HCT116 (cell line): ENCODE measurements at regions of chr4 and their contacts with region 1.

Region 1: DNA sequence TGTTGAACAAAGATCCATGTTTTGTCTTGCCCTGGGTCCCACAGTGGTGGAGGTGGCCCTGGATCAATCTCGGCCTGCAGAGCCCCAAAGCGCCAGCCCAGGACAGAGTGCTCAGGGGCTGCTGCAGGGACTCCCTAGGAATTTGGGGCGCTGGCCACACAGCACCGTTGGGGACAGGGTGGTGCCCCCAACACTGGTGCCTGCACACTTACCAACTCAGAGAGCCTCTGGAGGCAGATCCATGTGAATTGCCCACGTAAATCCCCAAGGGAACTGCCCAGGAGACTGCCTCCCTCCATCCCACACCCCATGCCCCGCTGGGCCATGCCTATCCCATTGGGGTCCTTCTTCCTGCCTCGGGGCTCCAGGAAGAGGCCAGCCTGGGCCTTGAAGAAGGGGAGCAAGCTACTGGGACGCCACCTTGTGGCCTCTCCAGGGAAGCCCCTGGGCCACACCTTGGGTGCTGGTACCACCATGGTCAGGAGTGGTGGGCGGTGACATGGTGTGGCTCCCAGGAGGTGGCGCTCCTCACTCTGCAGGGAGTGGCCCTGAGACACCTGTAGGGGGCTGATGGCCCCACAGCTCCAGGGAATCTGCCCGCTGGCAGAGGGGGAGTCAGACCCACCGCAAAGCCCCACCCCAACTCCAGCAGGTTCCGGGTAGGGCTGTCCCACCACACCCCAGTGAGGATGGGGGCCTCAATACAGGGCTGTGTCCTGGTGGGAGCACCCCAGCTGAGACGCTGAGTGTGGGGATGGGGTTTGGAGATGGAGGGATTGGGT is 22.8 kb downstream of the CFAP99 start:
- DNase-seq: peak; percentile 85
- ATAC-seq: peak; percentile 99
- H3K4me3 ChIP-seq: no peak overlapping the region
- H3K27ac ChIP-seq: no peak overlapping the region; the same call in 1 of the 2 replicates
- H3K4me1 ChIP-seq: peaks cover 4 to 10% of the 10 kb centered on the region in 2 experiments; a peak in 3 of 4 replicates
- H3K27me3 ChIP-seq: no peaks in the 10 kb centered on the region
- CTCF ChIP-seq: peak; percentile 97 to 100 (median 99)
- POLR2A ChIP-seq: no peak
- RAD21 ChIP-seq: peak; percentile 90

Region 2: DNA sequence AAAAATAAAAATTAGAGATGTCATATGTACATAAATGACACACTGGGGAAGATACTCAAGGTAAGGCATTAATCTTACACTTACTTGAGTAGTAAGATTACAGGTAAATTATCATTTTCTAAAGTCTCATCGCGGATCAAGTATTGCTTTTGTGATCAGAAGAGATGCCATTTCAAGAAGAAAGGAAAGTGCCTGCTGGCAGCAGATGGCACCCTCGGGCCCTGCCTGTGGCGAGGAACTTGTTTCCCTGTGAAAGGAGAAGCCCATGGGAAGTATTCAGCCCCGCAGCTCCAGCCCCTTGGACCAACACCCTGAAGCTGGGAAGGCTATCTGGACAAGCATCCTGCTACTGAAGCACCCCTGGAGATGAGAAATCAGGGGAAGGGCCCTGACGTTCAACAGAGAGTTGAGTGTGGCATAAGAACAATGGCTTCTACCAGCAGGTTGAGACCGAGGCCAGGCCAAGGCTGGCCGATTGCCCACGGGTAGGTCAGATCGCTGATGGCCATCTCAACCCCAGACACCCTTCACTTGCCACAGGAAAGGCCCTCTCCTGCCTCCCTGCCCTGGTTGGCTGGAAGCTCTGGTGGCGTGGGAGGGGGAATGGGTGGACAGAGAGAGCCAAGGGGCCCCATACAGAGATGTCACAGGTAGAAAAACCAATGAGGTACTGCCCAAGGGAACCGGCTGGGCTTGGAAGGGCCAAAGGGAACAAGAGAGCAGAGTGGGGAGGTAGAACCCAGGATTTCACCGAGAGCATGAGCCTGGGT is 160.9 kb before region 1 on chr4:
- CTCF ChIA-PET with region 1: interaction called, 3 read pairs
- POLR2A ChIA-PET with region 1: no interaction called
- RAD21 ChIA-PET with region 1: no interaction called
- intact Hi-C with region 1: loop called (anchors 1 kb)
- DNase-seq: no peak
- ATAC-seq: no peak
- H3K4me3 ChIP-seq: no peak overlapping the region
- H3K27ac ChIP-seq: no peak overlapping the region
- H3K4me1 ChIP-seq: peaks cover 0 to 8% of the 10 kb centered on the region in 2 experiments; a peak in 2 of 4 replicates
- H3K27me3 ChIP-seq: no peaks in the 10 kb centered on the region
- CTCF ChIP-seq: peak in 1 of 3 experiments; percentile 24; a peak in 1 of 6 replicates
- POLR2A ChIP-seq: no peak
- RAD21 ChIP-seq: no peak